Activated naive CD4-positive, alpha-beta T cell treated with anti-CD3 and anti-CD28 coated beads for 36 hours (primary cell): ENCODE measurements at regions of chr7 and their contacts with region 1.

Region 1: DNA sequence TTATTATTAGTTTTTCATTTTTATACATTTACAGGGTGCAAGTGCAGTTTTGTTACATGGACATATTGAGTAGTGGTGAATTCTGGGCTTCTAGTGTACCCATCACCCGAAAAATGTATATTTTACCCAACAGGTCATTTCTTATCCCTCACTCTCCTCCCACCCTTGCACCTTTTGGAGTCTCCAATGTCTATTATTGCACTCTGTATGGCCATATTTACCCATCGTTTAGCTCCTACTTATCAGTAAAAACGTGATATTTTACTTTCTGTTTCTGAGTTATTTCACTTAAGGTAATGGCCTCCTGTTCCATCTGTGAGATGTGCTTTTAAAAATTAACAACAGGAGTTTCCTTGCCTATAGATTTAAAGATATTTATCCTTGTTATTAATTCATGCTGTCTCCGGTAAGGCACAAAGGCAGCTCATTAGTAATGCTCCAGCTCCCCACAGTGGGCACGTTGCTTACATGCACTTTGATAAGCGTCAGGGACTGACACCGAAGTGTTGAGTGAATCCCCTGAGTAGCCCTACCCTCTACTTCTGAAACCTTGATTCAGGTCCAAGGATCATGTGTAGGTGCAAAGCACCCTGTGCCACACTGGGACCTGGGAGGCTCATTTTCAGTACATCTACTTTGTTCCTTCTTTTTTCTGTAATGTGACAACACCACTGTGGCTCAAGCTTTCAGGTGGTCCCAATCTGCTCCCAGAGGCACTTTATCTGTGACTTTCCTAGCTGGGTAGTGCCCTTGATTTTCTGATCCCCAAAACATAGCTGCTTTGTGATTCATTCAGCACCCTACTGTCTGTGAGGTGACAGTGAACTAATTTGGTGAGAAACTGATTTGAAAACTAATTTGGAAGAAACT is 27.3 kb downstream of the HYAL4 start:
- DNase-seq: peak; percentile 67
- H3K4me3 Mint-ChIP-seq: no peak overlapping the region
- H3K27ac Mint-ChIP-seq: no peak overlapping the region
- H3K4me1 Mint-ChIP-seq: no peaks in the 10 kb centered on the region
- H3K27me3 Mint-ChIP-seq: peaks cover 3% of the 10 kb centered on the region

Region 2: GRCh38 chr7:123580406-123581161 is 291.6 kb before region 1 on chr7:
- CTCF ChIA-PET with region 1: interaction called, 3 read pairs
- intact Hi-C with region 1: loop called (anchors 2 kb)
- DNase-seq: peak; percentile 12
- H3K4me3 Mint-ChIP-seq: no peak overlapping the region
- H3K27ac Mint-ChIP-seq: no peak overlapping the region
- H3K4me1 Mint-ChIP-seq: no peaks in the 10 kb centered on the region
- H3K27me3 Mint-ChIP-seq: peaks cover 9% of the 10 kb centered on the region

Region 3: DNA sequence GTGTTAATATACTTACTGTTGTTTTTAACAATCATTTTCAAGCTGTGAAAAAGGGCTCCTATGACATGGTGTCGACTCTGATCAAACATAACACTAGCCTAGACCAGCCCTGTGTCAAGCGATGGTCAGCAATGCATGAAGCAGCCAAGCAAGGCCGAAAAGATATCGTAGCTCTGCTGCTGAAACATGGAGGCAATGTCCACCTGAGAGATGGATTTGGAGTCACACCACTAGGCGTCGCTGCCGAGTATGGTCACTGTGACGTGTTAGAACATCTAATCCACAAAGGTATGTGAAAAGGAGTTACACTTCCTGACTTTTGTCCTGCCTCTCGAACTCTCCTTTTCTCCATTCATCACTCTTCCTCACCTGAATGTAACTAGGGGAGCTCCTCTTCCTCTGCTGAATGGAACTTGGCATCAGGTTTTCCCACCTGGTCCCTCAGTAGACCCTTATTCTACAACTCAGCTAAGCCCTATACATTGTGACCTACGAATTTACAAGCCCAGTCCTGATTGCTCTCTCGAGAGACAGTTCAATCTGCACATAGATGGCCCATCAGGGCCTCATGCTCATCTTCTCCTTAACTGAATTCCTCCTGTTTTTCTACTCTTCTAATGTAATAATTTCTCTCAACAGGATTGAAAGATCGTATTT is 247.6 kb before region 1 on chr7:
- CTCF ChIA-PET with region 1: interaction called, 10 read pairs
- intact Hi-C with region 1: no loop called
- DNase-seq: peak; percentile 79
- H3K4me3 Mint-ChIP-seq: no peak overlapping the region
- H3K27ac Mint-ChIP-seq: no peak overlapping the region
- H3K4me1 Mint-ChIP-seq: no peaks in the 10 kb centered on the region
- H3K27me3 Mint-ChIP-seq: no peaks in the 10 kb centered on the region

Region 4: DNA sequence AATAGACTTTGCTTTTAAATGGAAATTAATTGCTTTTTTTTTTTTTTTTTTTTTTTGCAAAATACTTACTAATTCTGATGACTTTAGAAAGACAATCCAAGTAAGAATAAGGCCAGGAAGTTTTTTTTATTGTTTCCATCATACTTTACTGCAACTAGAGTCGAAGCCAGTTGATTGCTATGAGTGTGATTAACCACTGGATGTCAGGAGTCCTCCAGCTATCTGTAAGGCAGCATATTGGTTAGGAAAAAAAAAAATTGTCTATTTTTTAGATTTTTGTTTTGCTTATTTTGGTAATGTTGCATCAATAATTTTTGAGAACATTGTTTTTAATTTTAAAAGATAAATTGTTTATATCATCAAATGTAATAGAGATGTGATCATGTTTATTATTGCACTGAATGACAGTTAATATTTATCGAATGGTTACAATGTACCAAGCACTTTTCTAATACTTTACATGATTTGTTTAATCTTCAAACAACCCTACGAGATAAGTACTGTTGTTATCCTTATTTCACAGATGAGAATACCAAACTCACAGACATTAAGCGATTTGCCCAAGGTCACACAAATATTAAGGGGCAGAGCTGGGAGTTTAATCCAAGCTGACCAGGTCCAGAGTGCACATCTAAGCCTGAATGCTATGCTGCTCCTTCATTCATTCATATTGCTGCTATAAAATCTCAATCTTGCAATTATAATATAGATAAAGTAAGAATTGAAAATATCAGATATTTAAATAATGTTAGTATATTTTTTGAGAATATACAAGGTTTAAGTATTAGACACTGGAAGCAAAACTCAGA is 236.5 kb before region 1 on chr7:
- CTCF ChIA-PET with region 1: interaction called, 3 read pairs
- intact Hi-C with region 1: loop called (anchors 2 kb)
- DNase-seq: no peak
- H3K4me3 Mint-ChIP-seq: no peak overlapping the region
- H3K27ac Mint-ChIP-seq: no peak overlapping the region
- H3K4me1 Mint-ChIP-seq: no peaks in the 10 kb centered on the region
- H3K27me3 Mint-ChIP-seq: peaks cover 17% of the 10 kb centered on the region

Region 5: GRCh38 chr7:123682690-123683089 is 189.5 kb before region 1 on chr7:
- CTCF ChIA-PET with region 1: interaction called, 7 read pairs
- intact Hi-C with region 1: loop called (anchors 1 kb)
- DNase-seq: peak; percentile 31
- H3K4me3 Mint-ChIP-seq: no peak overlapping the region
- H3K27ac Mint-ChIP-seq: no peak overlapping the region
- H3K4me1 Mint-ChIP-seq: no peaks in the 10 kb centered on the region
- H3K27me3 Mint-ChIP-seq: no peaks in the 10 kb centered on the region